MCF 10A (cell line): ENCODE measurements at regions of chr5 and their contacts with region 1.

Region 1: DNA sequence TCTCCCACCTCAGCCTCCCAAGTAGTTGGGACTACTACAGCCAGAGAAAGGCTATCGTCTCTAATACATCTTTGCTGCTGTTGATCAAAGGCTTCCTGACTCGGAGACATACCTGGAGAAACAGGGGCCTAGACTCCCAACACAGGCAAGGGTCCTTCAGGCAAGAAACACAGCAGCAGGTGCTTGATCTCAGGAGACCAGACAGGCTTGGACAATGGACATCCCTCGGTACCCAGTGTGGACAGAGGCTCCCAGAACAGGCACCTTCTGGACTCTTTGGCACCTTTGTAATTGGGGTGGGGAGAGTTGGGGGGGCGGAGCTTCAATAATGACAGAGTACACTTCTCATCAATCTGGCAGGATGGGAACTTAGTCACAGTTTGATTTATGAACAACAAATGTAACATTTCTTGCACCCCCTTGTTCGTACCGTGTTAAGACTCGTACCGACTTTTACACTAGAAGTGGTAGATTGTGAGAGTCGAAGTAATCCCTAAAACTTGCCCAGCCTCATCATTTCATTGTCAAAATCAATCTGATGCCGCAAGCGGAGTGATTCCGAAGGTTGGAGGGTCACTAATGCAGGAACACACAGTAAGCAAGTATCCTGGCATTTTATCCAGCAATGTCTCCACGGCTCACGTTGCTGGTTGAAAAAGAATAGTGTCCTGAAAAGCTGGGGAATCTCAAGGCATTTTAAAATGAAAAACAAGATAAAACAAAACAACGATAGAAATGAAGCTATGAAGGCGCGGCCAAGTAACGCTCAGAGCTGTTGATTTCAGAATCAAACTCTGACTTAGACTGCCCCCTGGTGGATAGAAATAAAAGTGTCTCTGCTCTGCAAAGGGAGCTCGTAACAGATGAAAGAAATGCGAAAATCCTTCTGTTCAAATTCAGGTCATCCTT is 46.4 kb upstream of the STK32A start:
- DNase-seq: peak; percentile 82
- H3K4me3 Mint-ChIP-seq: no peak overlapping the region
- H3K27ac Mint-ChIP-seq: no peak overlapping the region
- H3K4me1 Mint-ChIP-seq: no peaks in the 10 kb centered on the region
- H3K27me3 Mint-ChIP-seq: no peaks in the 10 kb centered on the region
- CTCF ChIP-seq: peak; percentile 91

Region 2: GRCh38 chr5:146533260-146533857 is 655.1 kb before region 1 on chr5:
- CTCF ChIA-PET with region 1: interaction called, 139 read pairs
- POLR2A ChIA-PET with region 1: interaction called, 6 read pairs
- intact Hi-C with region 1: loop called (anchors 1 kb)
- DNase-seq: peak; percentile 90
- H3K4me3 Mint-ChIP-seq: no peak overlapping the region
- H3K27ac Mint-ChIP-seq: no peak overlapping the region
- H3K4me1 Mint-ChIP-seq: peaks cover 8% of the 10 kb centered on the region
- H3K27me3 Mint-ChIP-seq: no peaks in the 10 kb centered on the region
- CTCF ChIP-seq: peak; percentile 96

Region 3: DNA sequence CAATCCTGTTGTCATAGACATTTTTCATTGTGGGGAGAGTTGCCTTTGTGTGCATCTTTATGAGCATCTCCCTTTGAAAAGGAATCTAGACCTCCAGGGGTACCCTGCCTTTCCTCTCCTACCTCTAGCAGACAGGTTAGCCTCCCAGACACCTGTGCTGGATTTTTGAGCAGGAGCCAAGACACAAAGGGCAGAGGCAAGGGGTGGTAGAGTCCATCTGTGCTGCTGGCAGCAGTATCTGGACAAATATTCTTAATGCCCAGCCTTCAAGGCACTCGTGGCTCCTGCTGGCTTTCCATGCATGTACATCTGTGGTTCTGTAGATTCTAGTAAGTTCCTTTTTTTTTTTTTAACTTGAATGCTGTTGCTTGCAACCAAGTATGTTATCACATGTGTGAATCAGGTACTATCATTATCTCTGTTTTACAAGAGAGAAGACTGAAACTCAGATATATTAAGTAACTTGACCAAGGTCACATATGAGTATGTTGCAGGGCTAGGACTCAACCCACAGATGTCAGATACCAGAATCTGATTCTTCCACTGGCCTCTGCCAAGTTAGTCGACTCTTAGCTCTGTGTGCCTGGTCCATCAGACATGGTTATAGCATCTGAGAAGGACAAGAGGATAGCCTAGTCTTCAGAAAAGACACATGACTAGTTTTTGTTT is 639.5 kb before region 1 on chr5:
- CTCF ChIA-PET with region 1: interaction called, 14 read pairs
- POLR2A ChIA-PET with region 1: no interaction called
- intact Hi-C with region 1: no loop called
- DNase-seq: no peak
- H3K4me3 Mint-ChIP-seq: no peak overlapping the region
- H3K27ac Mint-ChIP-seq: no peak overlapping the region
- H3K4me1 Mint-ChIP-seq: no peaks in the 10 kb centered on the region
- H3K27me3 Mint-ChIP-seq: peaks cover 69% of the 10 kb centered on the region
- CTCF ChIP-seq: no peak

Region 4: DNA sequence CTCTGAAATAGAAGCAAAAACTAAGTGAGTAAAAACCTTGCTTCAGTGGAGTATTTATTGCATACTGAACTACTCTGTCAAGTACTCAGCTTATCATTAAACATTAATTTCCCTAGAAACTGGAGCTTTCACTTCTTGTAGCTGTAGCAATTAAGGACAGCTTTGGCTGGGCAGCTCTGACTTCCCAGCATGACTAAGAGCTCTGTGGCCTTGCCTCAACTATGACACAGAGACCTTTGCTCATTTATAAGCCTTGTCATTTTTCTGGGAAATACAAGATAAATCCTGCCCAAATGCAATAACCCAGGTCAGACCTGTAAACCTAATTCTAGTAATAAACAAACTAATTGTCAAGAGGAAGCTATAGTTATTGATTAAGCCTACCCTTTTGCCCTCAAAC is 19.1 kb before region 1 on chr5:
- CTCF ChIA-PET with region 1: interaction called, 100 read pairs
- POLR2A ChIA-PET with region 1: no interaction called
- intact Hi-C with region 1: no loop called
- DNase-seq: peak; percentile 29
- H3K4me3 Mint-ChIP-seq: no peak overlapping the region
- H3K27ac Mint-ChIP-seq: no peak overlapping the region
- H3K4me1 Mint-ChIP-seq: no peaks in the 10 kb centered on the region
- H3K27me3 Mint-ChIP-seq: peaks cover under 1% of the 10 kb centered on the region
- CTCF ChIP-seq: no peak

Region 5: GRCh38 chr5:147200001-147200400 is 11.5 kb after region 1 on chr5:
- CTCF ChIA-PET with region 1: interaction called, 69 read pairs
- POLR2A ChIA-PET with region 1: no interaction called
- intact Hi-C with region 1: no loop called
- DNase-seq: no peak
- H3K4me3 Mint-ChIP-seq: no peak overlapping the region
- H3K27ac Mint-ChIP-seq: no peak overlapping the region
- H3K4me1 Mint-ChIP-seq: no peaks in the 10 kb centered on the region
- H3K27me3 Mint-ChIP-seq: peaks cover 55% of the 10 kb centered on the region
- CTCF ChIP-seq: no peak

Region 6: GRCh38 chr5:147223948-147224791 is 35.7 kb after region 1 on chr5:
- CTCF ChIA-PET with region 1: interaction called, 11 read pairs
- POLR2A ChIA-PET with region 1: no interaction called
- intact Hi-C with region 1: no loop called
- DNase-seq: peak; percentile 78
- H3K4me3 Mint-ChIP-seq: no peak overlapping the region
- H3K27ac Mint-ChIP-seq: no peak overlapping the region
- H3K4me1 Mint-ChIP-seq: peaks cover 7% of the 10 kb centered on the region
- H3K27me3 Mint-ChIP-seq: peaks cover 44% of the 10 kb centered on the region
- CTCF ChIP-seq: peak; percentile 87

Region 7: GRCh38 chr5:147369742-147370374 is 181.4 kb after region 1 on chr5:
- CTCF ChIA-PET with region 1: interaction called, 41 read pairs
- POLR2A ChIA-PET with region 1: no interaction called
- intact Hi-C with region 1: no loop called
- DNase-seq: peak; percentile 36
- H3K4me3 Mint-ChIP-seq: no peak overlapping the region
- H3K27ac Mint-ChIP-seq: no peak overlapping the region
- H3K4me1 Mint-ChIP-seq: no peaks in the 10 kb centered on the region
- H3K27me3 Mint-ChIP-seq: no peaks in the 10 kb centered on the region
- CTCF ChIP-seq: peak; percentile 88

Region 8: GRCh38 chr5:147796556-147797308 is 608.3 kb after region 1 on chr5:
- CTCF ChIA-PET with region 1: no interaction called
- POLR2A ChIA-PET with region 1: no interaction called
- intact Hi-C with region 1: no loop called
- DNase-seq: peak; percentile 65
- H3K4me3 Mint-ChIP-seq: peak overlapping the region; percentile 46
- H3K27ac Mint-ChIP-seq: no peak overlapping the region
- H3K4me1 Mint-ChIP-seq: peaks cover 6% of the 10 kb centered on the region
- H3K27me3 Mint-ChIP-seq: peaks cover 23% of the 10 kb centered on the region
- CTCF ChIP-seq: no peak